AG04449 (cell line): ENCODE measurements at regions of chr5 and their contacts with region 1.

Region 1: DNA sequence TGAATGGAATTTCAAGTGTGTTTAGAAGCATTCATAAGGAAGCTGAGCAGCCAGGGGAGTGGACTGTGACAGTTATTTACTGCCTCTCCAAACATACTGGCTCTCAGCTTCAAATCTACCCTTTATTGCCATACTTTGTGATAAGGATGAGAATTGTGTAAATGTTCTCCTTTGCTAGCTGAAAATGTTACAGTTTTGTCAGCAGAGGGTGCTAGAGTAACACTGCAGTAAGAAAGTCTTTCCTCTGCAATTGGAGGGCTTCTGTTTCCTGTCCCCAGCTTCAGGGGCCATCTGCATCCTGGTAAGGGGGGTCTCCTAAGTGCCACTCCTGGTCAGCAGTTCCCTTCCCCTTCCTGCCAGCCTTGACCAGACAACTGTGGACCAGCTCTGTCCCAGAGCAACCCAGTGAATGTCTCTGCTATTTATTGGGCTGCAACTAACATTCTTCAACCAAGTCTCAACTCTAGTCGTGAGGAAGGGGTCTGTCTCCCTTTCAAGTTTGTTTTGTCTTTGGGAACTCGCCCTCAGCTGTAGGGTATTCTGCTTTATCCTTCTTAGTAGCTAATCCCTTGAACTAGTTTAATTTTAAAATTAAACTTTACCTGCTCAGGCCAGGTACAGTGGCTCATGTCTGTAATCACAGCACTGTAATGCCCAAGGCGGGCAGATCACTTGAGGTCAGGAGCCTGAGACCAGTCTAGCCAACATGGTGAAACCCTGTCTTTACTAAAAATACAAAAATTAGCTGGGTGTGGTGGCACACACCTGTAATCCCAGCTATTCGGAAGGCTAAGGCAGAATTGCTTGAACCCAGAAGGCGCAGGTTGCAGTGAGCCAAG is 45.3 kb downstream of the RAPGEF6 start:
- DNase-seq: no peak
- H3K4me3 ChIP-seq: no peak overlapping the region
- CTCF ChIP-seq: peak; percentile 73

Region 2: GRCh38 chr5:131563434-131564228 is 26.1 kb before region 1 on chr5:
- CTCF ChIA-PET with region 1: interaction called, 21 read pairs
- POLR2A ChIA-PET with region 1: no interaction called
- DNase-seq: no peak
- H3K4me3 ChIP-seq: no peak overlapping the region
- CTCF ChIP-seq: no peak

Region 3: DNA sequence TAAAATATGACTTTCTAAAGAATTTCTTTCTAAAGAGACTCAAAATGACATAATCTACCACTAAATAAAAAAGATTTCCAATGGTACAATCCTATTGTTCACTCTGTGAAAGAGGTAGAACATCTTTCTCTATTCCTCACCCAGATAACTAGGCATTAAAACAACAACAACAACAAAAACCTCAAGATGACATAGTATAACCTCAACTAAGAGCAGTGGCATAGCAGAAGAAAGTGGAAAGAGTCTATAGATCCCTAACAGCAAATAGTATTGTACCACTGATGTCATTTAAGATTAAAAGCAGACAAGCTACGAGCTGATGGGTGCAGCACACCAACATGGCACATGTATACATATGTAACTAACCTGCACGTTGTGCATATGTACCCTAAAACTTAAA is 15.4 kb after region 1 on chr5:
- CTCF ChIA-PET with region 1: interaction called, 20 read pairs
- POLR2A ChIA-PET with region 1: no interaction called
- DNase-seq: no peak
- H3K4me3 ChIP-seq: no peak overlapping the region
- CTCF ChIP-seq: no peak

Region 4: GRCh38 chr5:131634666-131634995 is 44.9 kb after region 1 on chr5:
- CTCF ChIA-PET with region 1: interaction called, 22 read pairs
- POLR2A ChIA-PET with region 1: no interaction called
- DNase-seq: no peak
- H3K4me3 ChIP-seq: peak overlapping the region; percentile 93
- CTCF ChIP-seq: peak; percentile 21

Region 5: GRCh38 chr5:131796793-131797693 is 207.3 kb after region 1 on chr5 and contains the start of gene FNIP1:
- CTCF ChIA-PET with region 1: interaction called, 11 read pairs
- POLR2A ChIA-PET with region 1: no interaction called
- DNase-seq: peak; percentile 68
- H3K4me3 ChIP-seq: peak within 1 kb of the TSS; percentile 84
- CTCF ChIP-seq: peak; percentile 4

Region 6: DNA sequence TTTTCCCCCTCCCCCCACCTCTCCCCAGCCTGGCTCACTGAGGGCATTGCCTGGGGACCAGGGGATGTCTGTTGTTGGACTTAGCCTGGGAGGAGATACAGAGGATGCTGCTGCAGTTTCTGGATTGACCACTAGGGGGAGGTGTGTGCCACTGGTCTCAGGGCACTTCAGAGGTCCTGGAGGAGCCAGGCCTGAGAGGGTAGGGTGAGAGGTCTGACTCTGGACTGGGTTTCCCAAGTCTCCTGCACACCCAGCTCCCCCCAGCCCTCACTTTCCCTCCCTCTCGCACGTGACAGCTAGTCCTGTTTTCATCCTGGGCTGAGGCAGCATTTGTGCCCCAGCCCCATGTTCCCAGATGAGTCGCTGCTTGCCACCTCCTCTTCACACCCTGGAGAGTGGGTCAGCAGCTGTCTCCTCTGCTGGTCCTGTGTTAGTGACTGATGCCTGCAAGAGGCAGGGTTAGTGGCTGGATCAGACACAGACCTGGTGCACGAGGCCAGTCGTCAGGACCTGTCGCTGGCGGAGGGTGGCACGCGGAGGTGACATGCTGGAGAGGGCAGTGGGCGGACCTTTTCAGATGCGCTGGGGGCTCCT is 475.1 kb after region 1 on chr5:
- CTCF ChIA-PET with region 1: interaction called, 80 read pairs
- POLR2A ChIA-PET with region 1: no interaction called
- DNase-seq: no peak
- H3K4me3 ChIP-seq: no peak overlapping the region
- CTCF ChIP-seq: peak; percentile 94